ENCODE measurements at regions of chr1 and their contacts with region 1.

Region 1: GRCh38 chr1:78676347-78676982 is 26.8 kb downstream of the IFI44 start:
- DNase-seq: peak in 1 of 2 donors; percentile 87
- ATAC-seq: peak in 2 of 3 donors; percentile 59
- H3K4me3 ChIP-seq: no peak overlapping the region
- H3K4me3 Mint-ChIP-seq: no peak overlapping the region
- H3K27ac ChIP-seq: no peak overlapping the region
- H3K27ac Mint-ChIP-seq: no peak overlapping the region
- H3K4me1 ChIP-seq: no peaks in the 10 kb centered on the region
- H3K4me1 Mint-ChIP-seq: peaks cover 7% of the 10 kb centered on the region in 2 donors
- H3K27me3 ChIP-seq: no peaks in the 10 kb centered on the region
- H3K27me3 Mint-ChIP-seq: peaks cover 0 to 7% of the 10 kb centered on the region in 2 donors
- CTCF ChIP-seq: peak; percentile 91

Region 2: GRCh38 chr1:78126506-78126905 is 550.0 kb before region 1 on chr1:
- intact Hi-C with region 1: loop called (anchors 1 kb)
- DNase-seq: no peak
- ATAC-seq: no peak
- H3K4me3 ChIP-seq: no peak overlapping the region
- H3K4me3 Mint-ChIP-seq: no peak overlapping the region
- H3K27ac ChIP-seq: no peak overlapping the region
- H3K27ac Mint-ChIP-seq: no peak overlapping the region
- H3K4me1 ChIP-seq: no peaks in the 10 kb centered on the region
- H3K4me1 Mint-ChIP-seq: no peaks in the 10 kb centered on the region
- H3K27me3 ChIP-seq: no peaks in the 10 kb centered on the region
- H3K27me3 Mint-ChIP-seq: no peaks in the 10 kb centered on the region
- CTCF ChIP-seq: no peak

Region 3: GRCh38 chr1:78145105-78145580 is 531.3 kb before region 1 on chr1:
- intact Hi-C with region 1: loop called (anchors 2 kb)
- DNase-seq: peak in 1 of 2 donors; percentile 61
- ATAC-seq: peak; percentile 57 to 76 (median 74)
- H3K4me3 ChIP-seq: no peak overlapping the region
- H3K4me3 Mint-ChIP-seq: no peak overlapping the region
- H3K27ac ChIP-seq: no peak overlapping the region
- H3K27ac Mint-ChIP-seq: no peak overlapping the region
- H3K4me1 ChIP-seq: peaks cover 5% of the 10 kb centered on the region
- H3K4me1 Mint-ChIP-seq: peaks cover 6 to 7% of the 10 kb centered on the region in 2 donors
- H3K27me3 ChIP-seq: no peaks in the 10 kb centered on the region
- H3K27me3 Mint-ChIP-seq: peaks cover 6 to 18% of the 10 kb centered on the region in 2 donors
- CTCF ChIP-seq: peak; percentile 80

Region 4: DNA sequence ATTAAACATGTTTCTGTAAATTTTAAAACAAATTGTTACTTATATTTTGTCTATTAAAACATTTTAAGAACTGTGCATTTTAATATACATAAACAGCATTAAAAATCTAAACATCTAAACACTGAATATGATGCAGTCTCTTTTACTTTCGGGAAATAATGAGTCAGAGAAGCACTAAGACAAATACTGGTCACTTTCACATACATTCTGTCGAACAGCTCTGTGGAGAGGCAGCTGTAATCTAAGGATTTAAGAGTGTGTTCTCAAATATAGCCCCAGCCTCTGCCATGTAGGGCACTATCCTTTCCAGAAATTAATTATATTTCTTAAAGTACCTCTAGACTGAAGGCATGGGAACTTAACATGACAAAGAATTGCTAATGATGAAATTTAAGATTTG is 275.3 kb before region 1 on chr1:
- intact Hi-C with region 1: no loop called
- DNase-seq: no peak
- ATAC-seq: no peak
- H3K4me3 ChIP-seq: no peak overlapping the region
- H3K4me3 Mint-ChIP-seq: no peak overlapping the region
- H3K27ac ChIP-seq: no peak overlapping the region
- H3K27ac Mint-ChIP-seq: no peak overlapping the region
- H3K4me1 ChIP-seq: no peaks in the 10 kb centered on the region
- H3K4me1 Mint-ChIP-seq: no peaks in the 10 kb centered on the region
- H3K27me3 ChIP-seq: no peaks in the 10 kb centered on the region
- H3K27me3 Mint-ChIP-seq: no peaks in the 10 kb centered on the region
- CTCF ChIP-seq: no peak

Region 5: GRCh38 chr1:78540048-78540447 is 136.4 kb before region 1 on chr1:
- intact Hi-C with region 1: no loop called
- DNase-seq: no peak
- ATAC-seq: no peak
- H3K4me3 ChIP-seq: no peak overlapping the region
- H3K4me3 Mint-ChIP-seq: no peak overlapping the region
- H3K27ac ChIP-seq: no peak overlapping the region
- H3K27ac Mint-ChIP-seq: no peak overlapping the region
- H3K4me1 ChIP-seq: no peaks in the 10 kb centered on the region
- H3K4me1 Mint-ChIP-seq: no peaks in the 10 kb centered on the region
- H3K27me3 ChIP-seq: no peaks in the 10 kb centered on the region
- H3K27me3 Mint-ChIP-seq: no peaks in the 10 kb centered on the region
- CTCF ChIP-seq: no peak

Region 6: DNA sequence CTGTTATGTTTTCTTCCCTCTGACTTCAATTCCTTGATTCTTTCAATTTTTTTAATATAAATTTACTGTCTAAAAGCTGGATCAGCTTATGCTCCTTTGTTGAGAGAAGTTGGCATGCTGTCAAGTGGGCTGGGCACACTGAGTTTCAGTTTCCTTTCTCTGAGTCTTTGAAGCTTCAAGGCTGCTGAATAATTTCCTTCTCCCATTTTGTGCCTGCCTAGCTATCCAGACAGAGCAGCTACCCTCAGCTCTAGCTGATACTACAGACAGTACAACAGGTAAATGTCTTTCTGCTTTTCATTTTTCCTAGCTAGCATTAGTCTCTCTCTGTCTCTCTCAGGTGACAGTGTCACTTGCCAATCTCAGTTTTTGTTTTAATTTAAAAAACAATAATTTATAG is 26.8 kb before region 1 on chr1 and contains the start of gene IFI44:
- intact Hi-C with region 1: no loop called
- DNase-seq: peak; percentile 38 to 91
- ATAC-seq: peak; percentile 86 to 90 (median 87)
- H3K4me3 ChIP-seq: peak within 1 kb of the TSS; percentile 46
- H3K4me3 Mint-ChIP-seq: peak within 1 kb of the TSS; percentile 89
- H3K27ac ChIP-seq: peak within 1 kb of the TSS; percentile 67
- H3K27ac Mint-ChIP-seq: peak within 1 kb of the TSS; percentile 84 to 87
- H3K4me1 ChIP-seq: peaks cover 14% of the 10 kb centered on the region
- H3K4me1 Mint-ChIP-seq: peaks cover 73 to 84% of the 10 kb centered on the region in 2 donors
- H3K27me3 ChIP-seq: no peaks in the 10 kb centered on the region
- H3K27me3 Mint-ChIP-seq: no peaks in the 10 kb centered on the region
- CTCF ChIP-seq: no peak
- total RNA-seq, gene IFI44: 34.6 to 60.2 (median 35.5) TPM

Region 7: DNA sequence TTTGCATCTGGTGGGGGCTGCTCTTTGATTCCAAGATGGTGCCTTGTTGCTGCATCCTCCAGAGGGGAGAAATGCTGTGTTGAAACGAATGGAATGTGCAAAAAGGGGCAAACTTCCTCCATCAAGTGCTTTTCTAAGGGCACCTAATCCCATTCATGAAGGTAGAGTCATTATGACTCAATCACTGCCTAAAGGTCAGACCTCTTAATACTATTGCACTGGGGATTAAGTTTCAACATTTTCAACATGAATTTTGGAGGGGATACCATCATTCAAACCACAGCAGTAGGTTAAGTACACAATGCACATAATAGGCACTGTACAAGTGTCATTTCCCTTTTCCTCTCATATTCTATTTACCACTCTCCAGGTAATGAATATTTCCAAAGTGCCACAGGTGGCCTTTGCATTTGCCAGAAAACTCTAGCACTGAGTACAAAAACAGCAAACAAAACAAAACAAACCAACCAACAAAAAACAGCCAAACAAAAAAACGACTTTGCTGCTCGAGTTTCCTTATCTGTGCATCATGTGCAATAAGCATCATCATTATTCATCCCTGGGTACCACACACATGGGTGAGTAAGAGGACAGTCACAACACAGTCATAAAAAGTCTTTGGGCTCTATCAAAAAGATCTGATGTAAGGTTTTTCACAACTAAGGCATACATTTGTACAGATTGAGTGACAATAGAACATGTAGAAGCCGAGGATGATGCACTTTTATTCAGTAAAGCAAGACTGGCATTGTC is 15.7 kb after region 1 on chr1:
- intact Hi-C with region 1: no loop called
- DNase-seq: no peak
- ATAC-seq: no peak
- H3K4me3 ChIP-seq: no peak overlapping the region
- H3K4me3 Mint-ChIP-seq: no peak overlapping the region
- H3K27ac ChIP-seq: no peak overlapping the region
- H3K27ac Mint-ChIP-seq: no peak overlapping the region
- H3K4me1 ChIP-seq: no peaks in the 10 kb centered on the region
- H3K4me1 Mint-ChIP-seq: no peaks in the 10 kb centered on the region
- H3K27me3 ChIP-seq: no peaks in the 10 kb centered on the region
- H3K27me3 Mint-ChIP-seq: peaks cover 0 to 8% of the 10 kb centered on the region in 2 donors
- CTCF ChIP-seq: no peak

Measured in natural killer cell (primary cell).